PC-9 (cell line): ENCODE measurements at regions of chrX and their contacts with region 1.

Region 1: GRCh38 chrX:46325312-46325877 is 219.8 kb downstream of the ZNF674 start:
- DNase-seq: peak; percentile 84 to 90
- H3K4me3 ChIP-seq: peak overlapping the region; percentile 11; the same call in 1 of the 2 replicates
- H3K27ac ChIP-seq: peak overlapping the region; percentile 100
- H3K4me1 ChIP-seq: peaks cover 39% of the 10 kb centered on the region
- H3K27me3 ChIP-seq: no peaks in the 10 kb centered on the region
- CTCF ChIP-seq: no peak

Region 2: DNA sequence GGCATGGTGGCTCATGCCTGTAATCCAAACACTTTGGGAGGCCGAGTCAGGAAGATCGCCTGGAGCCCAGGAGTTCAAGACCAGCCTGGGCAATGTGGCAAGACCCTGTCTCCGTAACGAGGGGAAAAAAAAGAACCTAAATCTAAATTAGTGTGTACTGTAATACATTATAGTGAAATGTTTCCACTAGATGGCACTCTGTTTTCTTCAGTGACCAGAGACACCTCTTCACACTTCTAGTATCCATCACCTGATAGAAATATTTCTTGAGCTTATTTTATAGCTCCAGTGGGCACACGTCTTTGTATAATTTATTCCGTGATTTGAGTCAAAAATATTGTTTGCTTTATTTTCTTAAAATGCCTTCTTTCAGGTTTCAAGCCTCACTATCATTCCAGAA is 523.8 kb before region 1 on chrX:
- CTCF ChIA-PET with region 1: interaction called, 4 read pairs
- POLR2A ChIA-PET with region 1: no interaction called
- intact Hi-C with region 1: loop called (anchors 5 kb)
- DNase-seq: no peak
- H3K4me3 ChIP-seq: no peak overlapping the region
- H3K27ac ChIP-seq: 0 out of 2 replicates have a peak overlapping the region, but pooled peaks have one; percentile 83
- H3K4me1 ChIP-seq: peaks cover 23% of the 10 kb centered on the region; the same call in 1 of the 2 replicates
- H3K27me3 ChIP-seq: no peaks in the 10 kb centered on the region
- CTCF ChIP-seq: peak; percentile 24

Region 3: DNA sequence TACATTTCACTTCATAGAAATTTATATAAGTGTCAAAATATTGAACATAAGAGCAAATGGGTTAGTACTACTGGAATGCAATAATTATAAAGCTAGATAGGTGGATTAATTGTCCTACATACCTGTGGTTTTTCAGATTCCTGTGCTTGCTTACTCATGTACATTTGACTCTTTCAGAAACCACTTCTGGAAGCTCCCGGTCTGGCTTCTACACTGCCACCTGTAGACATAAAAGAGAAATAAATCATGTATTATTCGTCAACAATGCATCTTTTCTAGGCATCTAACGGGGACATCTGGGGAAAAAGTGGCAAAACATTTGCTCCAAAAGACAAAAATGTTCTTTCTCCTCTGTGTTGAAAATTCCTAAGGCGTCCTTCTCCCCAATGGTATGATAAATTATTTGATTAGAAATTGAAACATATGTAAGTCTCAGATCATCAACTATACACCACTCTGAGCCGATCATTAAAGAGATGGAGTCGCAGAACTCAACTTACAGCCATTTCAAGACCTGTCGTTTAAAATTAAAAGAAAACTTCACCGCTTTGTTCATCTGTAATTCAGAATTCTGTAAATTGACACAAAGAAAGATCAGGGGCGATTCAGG is 476.0 kb before region 1 on chrX:
- CTCF ChIA-PET with region 1: no interaction called
- POLR2A ChIA-PET with region 1: interaction called, 4 read pairs
- intact Hi-C with region 1: loop called (anchors 1 kb)
- DNase-seq: peak; percentile 8 to 78
- H3K4me3 ChIP-seq: peak overlapping the region; percentile 69
- H3K27ac ChIP-seq: peak overlapping the region; percentile 92
- H3K4me1 ChIP-seq: peaks cover 31% of the 10 kb centered on the region; the same call in 1 of the 2 replicates
- H3K27me3 ChIP-seq: no peaks in the 10 kb centered on the region
- CTCF ChIP-seq: no peak; the same call in 1 of the 2 replicates

Region 4: DNA sequence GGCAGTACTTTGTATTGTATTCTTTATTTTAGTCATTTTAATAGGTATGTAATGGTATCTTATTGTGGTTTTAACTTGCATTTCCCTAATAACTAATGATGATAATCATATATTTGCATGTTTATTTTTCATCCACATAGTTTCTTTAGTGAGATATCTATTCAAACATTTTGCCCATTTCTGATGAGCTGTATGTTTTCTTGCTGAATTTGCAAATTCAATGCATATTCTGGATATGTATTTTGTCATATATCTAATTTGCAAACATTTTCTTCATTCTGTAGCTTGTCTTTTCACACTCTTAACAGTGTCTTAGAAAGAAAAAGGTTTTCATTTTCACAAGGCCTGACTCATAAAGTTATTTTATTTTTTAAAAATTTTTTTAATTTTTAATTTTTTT is 152.2 kb before region 1 on chrX:
- CTCF ChIA-PET with region 1: no interaction called
- POLR2A ChIA-PET with region 1: no interaction called
- intact Hi-C with region 1: no loop called
- DNase-seq: no peak
- H3K4me3 ChIP-seq: no peak overlapping the region
- H3K27ac ChIP-seq: no peak overlapping the region
- H3K4me1 ChIP-seq: no peaks in the 10 kb centered on the region
- H3K27me3 ChIP-seq: no peaks in the 10 kb centered on the region
- CTCF ChIP-seq: no peak

Region 5: GRCh38 chrX:46260513-46260912 is 64.9 kb before region 1 on chrX:
- CTCF ChIA-PET with region 1: no interaction called
- POLR2A ChIA-PET with region 1: interaction called, 16 read pairs
- intact Hi-C with region 1: loop called (anchors 1 kb)
- DNase-seq: peak; percentile 65 to 89
- H3K4me3 ChIP-seq: no peak overlapping the region
- H3K27ac ChIP-seq: peak overlapping the region; percentile 99
- H3K4me1 ChIP-seq: peaks cover 40% of the 10 kb centered on the region
- H3K27me3 ChIP-seq: no peaks in the 10 kb centered on the region
- CTCF ChIP-seq: no peak

Region 6: DNA sequence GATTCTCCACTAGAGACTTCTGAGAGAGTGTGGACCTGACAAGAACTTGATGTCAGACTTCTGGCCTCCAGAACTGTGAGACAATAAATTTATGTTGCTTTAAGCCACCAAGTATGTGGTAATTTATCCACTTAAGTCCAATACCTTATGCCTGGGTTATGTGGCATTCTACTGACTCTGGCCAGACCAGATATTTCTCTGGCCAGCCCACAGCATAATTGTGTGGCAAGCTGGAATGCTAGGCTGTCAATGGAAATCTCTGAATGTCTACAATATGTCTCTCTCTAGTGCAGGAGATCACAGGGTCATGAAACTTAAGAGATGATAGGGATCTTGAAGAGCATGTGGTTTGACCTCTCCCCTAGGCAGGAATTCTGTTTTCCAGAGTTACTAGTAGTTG is 31.2 kb before region 1 on chrX:
- CTCF ChIA-PET with region 1: no interaction called
- POLR2A ChIA-PET with region 1: no interaction called
- intact Hi-C with region 1: loop called (anchors 1 kb)
- DNase-seq: peak; percentile 15 to 42
- H3K4me3 ChIP-seq: no peak overlapping the region
- H3K27ac ChIP-seq: peak overlapping the region; percentile 19; the same call in 1 of the 2 replicates
- H3K4me1 ChIP-seq: no peaks in the 10 kb centered on the region
- H3K27me3 ChIP-seq: no peaks in the 10 kb centered on the region
- CTCF ChIP-seq: no peak

Region 7: GRCh38 chrX:46433892-46434291 is 108.5 kb after region 1 on chrX:
- CTCF ChIA-PET with region 1: no interaction called
- POLR2A ChIA-PET with region 1: no interaction called
- intact Hi-C with region 1: no loop called
- DNase-seq: no peak
- H3K4me3 ChIP-seq: no peak overlapping the region
- H3K27ac ChIP-seq: no peak overlapping the region
- H3K4me1 ChIP-seq: no peaks in the 10 kb centered on the region
- H3K27me3 ChIP-seq: no peaks in the 10 kb centered on the region
- CTCF ChIP-seq: no peak

Region 8: GRCh38 chrX:46531442-46531841 is 206.0 kb after region 1 on chrX:
- CTCF ChIA-PET with region 1: no interaction called
- POLR2A ChIA-PET with region 1: no interaction called
- intact Hi-C with region 1: no loop called
- DNase-seq: no peak
- H3K4me3 ChIP-seq: no peak overlapping the region
- H3K27ac ChIP-seq: no peak overlapping the region
- H3K4me1 ChIP-seq: no peaks in the 10 kb centered on the region
- H3K27me3 ChIP-seq: no peaks in the 10 kb centered on the region
- CTCF ChIP-seq: no peak